ENCODE measurements at regions of chr3 and their contacts with region 1.

Region 1: GRCh38 chr3:105518806-105519418 is 152.2 kb downstream of the ALCAM start:
- DNase-seq: peak; percentile 18
- H3K4me3 Mint-ChIP-seq: no peak overlapping the region
- H3K27ac Mint-ChIP-seq: no peak overlapping the region
- H3K4me1 Mint-ChIP-seq: peaks cover 3% of the 10 kb centered on the region
- H3K27me3 Mint-ChIP-seq: no peaks in the 10 kb centered on the region

Region 2: GRCh38 chr3:104564045-104564643 is 954.8 kb before region 1 on chr3:
- CTCF ChIA-PET with region 1: no interaction called
- POLR2A ChIA-PET with region 1: no interaction called
- intact Hi-C with region 1: loop called (anchors 2 kb)
- DNase-seq: peak; percentile 70
- H3K4me3 Mint-ChIP-seq: no peak overlapping the region
- H3K27ac Mint-ChIP-seq: no peak overlapping the region
- H3K4me1 Mint-ChIP-seq: no peaks in the 10 kb centered on the region
- H3K27me3 Mint-ChIP-seq: peaks cover 2% of the 10 kb centered on the region

Region 3: DNA sequence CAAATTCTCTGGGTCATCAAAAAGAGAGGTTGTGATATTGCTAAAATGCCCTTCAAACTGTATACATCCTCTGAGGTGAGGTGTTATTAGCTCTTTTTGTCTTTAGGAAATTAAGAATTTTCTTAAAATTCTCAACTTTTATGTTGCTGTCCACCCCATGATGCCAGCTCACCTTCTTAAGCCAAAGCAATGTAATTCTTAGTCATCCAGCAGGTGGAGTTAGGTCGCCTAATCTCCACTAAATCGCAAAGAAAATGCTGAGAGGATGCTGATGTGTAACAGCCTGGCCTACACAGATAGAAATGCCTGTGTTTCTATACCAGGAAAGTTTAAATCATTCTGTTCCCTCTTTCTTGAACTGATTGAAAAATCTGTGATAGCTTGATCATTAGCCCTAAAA is 922.4 kb before region 1 on chr3:
- CTCF ChIA-PET with region 1: interaction called, 15 read pairs
- POLR2A ChIA-PET with region 1: no interaction called
- intact Hi-C with region 1: loop called (anchors 10 kb)
- DNase-seq: no peak
- H3K4me3 Mint-ChIP-seq: no peak overlapping the region
- H3K27ac Mint-ChIP-seq: no peak overlapping the region
- H3K4me1 Mint-ChIP-seq: no peaks in the 10 kb centered on the region
- H3K27me3 Mint-ChIP-seq: no peaks in the 10 kb centered on the region

Region 4: GRCh38 chr3:104628185-104628789 is 890.6 kb before region 1 on chr3:
- CTCF ChIA-PET with region 1: no interaction called
- POLR2A ChIA-PET with region 1: no interaction called
- intact Hi-C with region 1: loop called (anchors 1 kb)
- DNase-seq: no peak
- H3K4me3 Mint-ChIP-seq: no peak overlapping the region
- H3K27ac Mint-ChIP-seq: no peak overlapping the region
- H3K4me1 Mint-ChIP-seq: no peaks in the 10 kb centered on the region
- H3K27me3 Mint-ChIP-seq: no peaks in the 10 kb centered on the region

Region 5: GRCh38 chr3:105456017-105456416 is 62.9 kb before region 1 on chr3:
- CTCF ChIA-PET with region 1: no interaction called
- POLR2A ChIA-PET with region 1: no interaction called
- intact Hi-C with region 1: no loop called
- DNase-seq: no peak
- H3K4me3 Mint-ChIP-seq: no peak overlapping the region
- H3K27ac Mint-ChIP-seq: no peak overlapping the region
- H3K4me1 Mint-ChIP-seq: peaks cover 2% of the 10 kb centered on the region
- H3K27me3 Mint-ChIP-seq: no peaks in the 10 kb centered on the region

Region 6: DNA sequence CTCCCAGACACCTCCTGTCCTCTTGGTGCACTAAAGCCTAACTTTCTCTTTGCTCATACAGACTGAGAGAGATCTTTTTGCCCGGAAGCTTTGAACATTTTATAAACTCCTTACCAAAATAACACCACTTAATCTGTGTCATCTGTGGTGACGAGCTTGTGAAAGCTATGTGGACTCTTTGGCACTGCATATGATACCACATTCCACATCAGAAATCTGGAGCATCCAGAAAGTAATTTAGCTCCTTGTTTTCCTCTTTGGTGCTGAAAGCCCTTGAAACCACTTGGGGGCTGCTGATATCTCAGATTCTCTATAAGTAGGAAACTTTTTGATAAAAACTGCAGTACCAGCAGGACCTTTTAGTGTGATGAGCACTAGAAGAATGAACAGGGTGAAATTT is 23.9 kb before region 1 on chr3:
- CTCF ChIA-PET with region 1: no interaction called
- POLR2A ChIA-PET with region 1: no interaction called
- intact Hi-C with region 1: no loop called
- DNase-seq: no peak
- H3K4me3 Mint-ChIP-seq: no peak overlapping the region
- H3K27ac Mint-ChIP-seq: no peak overlapping the region
- H3K4me1 Mint-ChIP-seq: no peaks in the 10 kb centered on the region
- H3K27me3 Mint-ChIP-seq: no peaks in the 10 kb centered on the region

Region 7: GRCh38 chr3:105505170-105505569 is 13.7 kb before region 1 on chr3:
- CTCF ChIA-PET with region 1: interaction called, 13 read pairs
- POLR2A ChIA-PET with region 1: no interaction called
- intact Hi-C with region 1: no loop called
- DNase-seq: no peak
- H3K4me3 Mint-ChIP-seq: no peak overlapping the region
- H3K27ac Mint-ChIP-seq: no peak overlapping the region
- H3K4me1 Mint-ChIP-seq: no peaks in the 10 kb centered on the region
- H3K27me3 Mint-ChIP-seq: no peaks in the 10 kb centered on the region

Region 8: GRCh38 chr3:105538483-105538882 is 19.6 kb after region 1 on chr3:
- CTCF ChIA-PET with region 1: no interaction called
- POLR2A ChIA-PET with region 1: no interaction called
- intact Hi-C with region 1: no loop called
- DNase-seq: no peak
- H3K4me3 Mint-ChIP-seq: no peak overlapping the region
- H3K27ac Mint-ChIP-seq: no peak overlapping the region
- H3K4me1 Mint-ChIP-seq: no peaks in the 10 kb centered on the region
- H3K27me3 Mint-ChIP-seq: no peaks in the 10 kb centered on the region

Region 9: GRCh38 chr3:105715372-105715771 is 196.5 kb after region 1 on chr3:
- CTCF ChIA-PET with region 1: no interaction called
- POLR2A ChIA-PET with region 1: no interaction called
- intact Hi-C with region 1: no loop called
- DNase-seq: no peak
- H3K4me3 Mint-ChIP-seq: no peak overlapping the region
- H3K27ac Mint-ChIP-seq: no peak overlapping the region
- H3K4me1 Mint-ChIP-seq: peaks cover 8% of the 10 kb centered on the region
- H3K27me3 Mint-ChIP-seq: no peaks in the 10 kb centered on the region

Region 10: DNA sequence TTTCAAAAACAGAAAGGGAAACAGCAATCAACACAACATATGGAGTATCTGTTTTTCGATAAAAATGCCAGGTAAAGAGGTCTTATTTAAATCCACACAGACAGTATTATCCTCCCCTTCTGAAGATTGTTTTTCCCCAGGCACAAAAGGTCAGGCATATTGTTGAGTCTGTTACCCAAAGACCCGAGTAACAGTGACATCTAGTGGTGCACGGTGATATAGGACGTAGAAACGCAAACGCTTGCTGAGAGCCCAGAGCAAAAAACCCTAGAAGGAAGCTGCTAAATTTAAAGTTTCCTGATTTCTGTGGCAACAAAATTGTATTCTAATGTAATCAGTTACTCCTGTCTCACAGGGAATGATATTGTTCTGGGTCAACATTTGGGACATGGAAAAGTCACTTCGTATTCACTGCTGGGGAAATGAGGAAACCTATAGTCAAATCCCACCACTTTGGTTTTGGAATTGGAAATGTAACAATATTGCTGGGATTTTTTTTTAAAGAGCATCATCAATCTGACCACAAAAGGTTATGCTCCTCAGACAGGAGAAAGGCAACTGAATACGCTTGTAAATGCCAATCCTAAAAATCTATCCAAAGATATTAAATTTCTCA is 1545.6 kb after region 1 on chr3:
- CTCF ChIA-PET with region 1: no interaction called
- POLR2A ChIA-PET with region 1: no interaction called
- intact Hi-C with region 1: loop called (anchors 10 kb)
- DNase-seq: peak; percentile 72
- H3K4me3 Mint-ChIP-seq: no peak overlapping the region
- H3K27ac Mint-ChIP-seq: no peak overlapping the region
- H3K4me1 Mint-ChIP-seq: peaks cover 18% of the 10 kb centered on the region
- H3K27me3 Mint-ChIP-seq: peaks cover 9% of the 10 kb centered on the region